ENCODE measurements at regions of chr17 and their contacts with region 1.

Region 1: DNA sequence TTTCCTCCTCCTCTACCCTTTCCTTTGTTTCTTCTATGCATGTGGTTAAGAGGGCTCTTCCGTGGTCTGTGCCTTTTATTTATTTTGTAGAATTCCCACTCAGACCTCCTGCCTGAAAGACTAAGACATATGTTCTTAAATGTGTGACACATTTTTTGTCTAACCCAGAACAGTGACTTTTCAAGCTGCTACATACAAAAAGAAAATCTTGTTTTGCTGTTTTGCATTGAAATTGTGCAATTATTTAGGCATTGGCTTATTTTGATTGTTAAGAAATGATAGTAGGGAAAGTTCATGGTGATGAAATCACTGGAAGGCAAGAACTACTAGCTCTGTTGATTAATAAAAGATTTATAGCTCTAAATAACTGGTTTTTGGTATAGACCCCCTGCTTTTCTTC is 76.8 kb downstream of the TUBD1 start:
- DNase-seq: no peak
- ATAC-seq: 0 out of 2 replicates have a peak, but pooled peaks have one; percentile 17
- H3K4me3 ChIP-seq: no peak overlapping the region
- H3K27ac ChIP-seq: no peak overlapping the region
- H3K4me1 ChIP-seq: peaks cover 6% of the 10 kb centered on the region
- H3K27me3 ChIP-seq: no peaks in the 10 kb centered on the region
- CTCF ChIP-seq: no peak
- POLR2A ChIP-seq: no peak
- RAD21 ChIP-seq: no peak

Region 2: GRCh38 chr17:59829217-59830006 is 13.4 kb after region 1 on chr17:
- CTCF ChIA-PET with region 1: no interaction called
- POLR2A ChIA-PET with region 1: no interaction called
- dilution Hi-C with region 1: no loop called
- in situ Hi-C with region 1: no loop called
- intact Hi-C with region 1: loop called (anchors 2 kb)
- DNase-seq: peak; percentile 98
- ATAC-seq: peak; percentile 75
- H3K4me3 ChIP-seq: peak overlapping the region; percentile 33; the same call in 1 of the 2 replicates
- H3K27ac ChIP-seq: peak overlapping the region; percentile 100
- H3K4me1 ChIP-seq: peaks cover 25% of the 10 kb centered on the region
- H3K27me3 ChIP-seq: no peaks in the 10 kb centered on the region
- CTCF ChIP-seq: no peak
- POLR2A ChIP-seq: no peak; the same call in 1 of the 2 replicates
- RAD21 ChIP-seq: 0 out of 2 replicates have a peak, but pooled peaks have one; percentile 16